ENCODE measurements at regions of chrX and their contacts with region 1.

Region 1: DNA sequence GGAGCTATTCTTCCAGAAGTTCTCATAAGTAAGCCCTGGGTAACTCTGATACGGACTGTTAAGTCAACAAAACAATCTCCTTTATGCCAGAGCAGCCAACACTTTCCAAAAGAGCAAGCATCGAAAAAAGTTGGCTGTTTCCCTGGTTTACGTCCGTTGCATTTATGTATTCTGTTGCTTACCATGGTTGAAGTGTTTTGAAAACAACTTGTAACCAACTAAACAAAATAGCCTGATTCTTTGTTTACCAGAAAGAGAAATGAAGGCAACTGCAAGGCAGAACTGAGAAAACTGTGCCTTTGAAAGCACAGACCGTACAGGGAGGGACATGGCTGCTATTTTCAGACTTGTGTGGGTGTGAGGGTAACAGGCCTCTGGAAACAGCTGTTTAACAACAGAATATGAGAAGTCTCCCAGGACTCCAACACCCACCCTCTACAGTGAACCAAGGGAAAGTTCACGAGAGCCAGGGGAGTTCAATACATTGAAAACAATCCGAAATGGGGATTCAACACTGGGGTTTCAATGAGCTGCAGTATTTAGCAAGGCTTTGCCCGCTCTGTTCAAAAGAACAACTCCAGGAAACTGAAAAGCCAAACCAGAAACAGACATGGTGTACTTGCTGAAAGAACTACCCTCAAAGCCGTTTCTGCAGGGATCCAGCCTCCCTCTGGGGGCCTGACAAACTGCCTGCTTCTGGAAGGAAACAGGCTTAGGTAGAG is 95.8 kb upstream of the EGFL6 start:
- DNase-seq: peak; percentile 10
- ATAC-seq: peak; percentile 42
- H3K4me3 Mint-ChIP-seq: peak overlapping the region; percentile 52
- H3K27ac Mint-ChIP-seq: peak overlapping the region; percentile 85
- H3K4me1 Mint-ChIP-seq: peaks cover 24% of the 10 kb centered on the region
- H3K27me3 Mint-ChIP-seq: no peaks in the 10 kb centered on the region

Region 2: DNA sequence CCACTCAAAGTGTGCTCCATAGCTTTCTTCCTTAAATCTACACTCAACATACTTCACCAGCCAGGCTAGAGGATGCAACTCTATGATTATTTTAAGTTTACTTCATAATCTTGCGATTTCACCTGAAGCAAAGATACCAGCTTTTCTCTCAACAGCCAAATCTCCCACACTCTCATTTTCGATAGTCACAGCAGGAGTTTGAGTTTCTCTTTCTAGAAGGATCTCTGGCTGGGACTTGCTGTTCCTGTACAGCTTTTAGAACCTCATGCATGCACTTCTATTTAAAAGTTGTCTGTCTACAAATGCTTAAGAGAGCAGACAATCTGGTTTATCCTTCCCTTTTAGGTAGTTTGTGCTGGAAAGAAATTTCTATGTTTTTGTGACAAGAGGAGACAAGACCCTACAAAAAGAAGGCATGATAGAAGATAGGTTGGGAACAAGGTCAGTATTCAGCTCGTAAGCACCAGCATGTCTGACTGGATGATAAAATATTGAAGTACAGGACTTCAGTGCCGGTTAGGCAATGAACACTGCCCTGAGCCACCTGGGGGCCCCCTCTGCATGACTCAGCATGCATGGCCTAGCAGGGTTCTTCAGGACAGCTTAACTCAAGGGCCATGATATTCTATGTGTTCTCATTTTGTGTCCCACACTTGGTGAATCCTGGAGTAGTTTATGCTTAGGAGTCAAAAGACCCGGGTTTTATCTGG is 219.4 kb before region 1 on chrX:
- CTCF ChIA-PET with region 1: no interaction called
- POLR2A ChIA-PET with region 1: no interaction called
- intact Hi-C with region 1: loop called in 1 of 2 experiments (anchors 10 kb)
- DNase-seq: peak; percentile 17
- ATAC-seq: peak; percentile 42
- H3K4me3 Mint-ChIP-seq: no peak overlapping the region
- H3K27ac Mint-ChIP-seq: no peak overlapping the region
- H3K4me1 Mint-ChIP-seq: peaks cover 46% of the 10 kb centered on the region
- H3K27me3 Mint-ChIP-seq: no peaks in the 10 kb centered on the region

Region 3: GRCh38 chrX:13452283-13452682 is 21.3 kb before region 1 on chrX:
- CTCF ChIA-PET with region 1: no interaction called
- POLR2A ChIA-PET with region 1: no interaction called
- intact Hi-C with region 1: no loop called
- DNase-seq: no peak
- ATAC-seq: no peak
- H3K4me3 Mint-ChIP-seq: no peak overlapping the region
- H3K27ac Mint-ChIP-seq: no peak overlapping the region
- H3K4me1 Mint-ChIP-seq: no peaks in the 10 kb centered on the region
- H3K27me3 Mint-ChIP-seq: no peaks in the 10 kb centered on the region